Panc1 (cell line): ENCODE measurements at regions of chr6 and their contacts with region 1.

Region 1: DNA sequence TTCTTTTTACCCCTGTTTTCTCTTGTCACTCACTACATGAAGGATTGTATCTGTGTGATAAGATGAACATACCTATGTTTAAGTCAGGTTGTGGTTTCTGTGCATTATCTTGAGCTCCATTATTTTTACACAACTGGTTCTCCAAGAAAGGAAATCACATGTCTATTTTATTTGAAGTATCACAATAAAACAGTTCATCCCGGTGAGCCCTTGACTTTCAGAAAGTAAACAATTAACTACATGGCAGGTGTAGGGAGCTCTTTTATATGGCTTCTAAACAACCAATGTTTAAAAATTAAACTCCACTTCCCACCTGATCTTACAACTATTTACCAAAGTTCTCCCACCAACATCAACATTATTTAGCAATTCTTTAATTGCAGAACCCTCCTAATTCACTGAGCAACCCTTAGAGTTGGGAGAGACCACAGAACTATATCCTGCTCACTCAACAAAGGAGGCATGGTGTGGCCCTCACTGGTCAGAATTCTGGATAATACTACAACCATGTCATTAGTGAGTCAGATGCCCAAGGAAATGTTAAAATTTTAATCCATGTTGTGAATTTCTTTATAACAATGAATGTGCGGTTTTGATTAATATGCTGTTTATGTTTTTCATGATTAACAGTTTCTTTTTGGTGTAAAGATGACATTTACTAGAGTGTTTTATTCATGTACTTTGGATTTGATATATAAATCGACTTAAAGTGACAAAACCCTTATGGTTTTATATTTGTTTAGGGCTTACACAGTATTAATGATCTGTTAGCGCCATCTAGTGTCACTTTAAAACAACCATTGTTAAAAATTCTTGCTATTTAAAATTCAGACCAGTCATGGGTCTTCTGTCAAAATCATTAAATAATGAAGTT is 50.0 kb upstream of the SCGN start:
- DNase-seq: peak; percentile 15
- ATAC-seq: no peak
- H3K4me3 ChIP-seq: no peak overlapping the region
- H3K27ac ChIP-seq: no peak overlapping the region
- H3K4me1 ChIP-seq: no peaks in the 10 kb centered on the region
- H3K27me3 ChIP-seq: no peaks in the 10 kb centered on the region; the same call in 1 of the 2 replicates
- CTCF ChIP-seq: peak; percentile 32; the same call in 1 of the 2 replicates

Region 2: DNA sequence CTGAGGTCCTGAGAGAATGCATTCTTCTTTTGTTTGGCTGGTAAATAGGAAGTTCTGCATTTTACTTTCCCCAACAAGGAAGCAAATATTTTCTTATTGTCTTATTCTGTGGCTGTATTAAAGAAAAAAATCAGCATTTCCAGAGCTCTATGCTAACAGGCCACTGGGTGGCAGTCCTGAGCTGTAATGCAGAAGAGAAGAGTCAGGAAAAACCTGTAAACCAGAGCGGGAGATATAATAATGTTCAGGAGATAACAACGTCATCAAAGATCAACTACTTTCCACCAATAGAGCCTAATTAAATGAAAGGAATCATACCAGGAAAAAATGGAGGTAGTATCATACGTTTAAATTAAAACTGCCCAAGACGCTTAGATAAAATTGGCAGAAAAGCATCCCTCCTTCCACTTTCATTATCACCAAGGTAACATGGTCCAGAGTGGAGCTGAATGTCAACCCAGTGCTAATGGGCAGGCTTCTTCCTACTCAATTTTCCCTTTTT is 378.5 kb before region 1 on chr6:
- CTCF ChIA-PET with region 1: interaction called, 3 read pairs
- POLR2A ChIA-PET with region 1: no interaction called
- in situ Hi-C with region 1: no loop called
- intact Hi-C with region 1: loop called (anchors 2 kb)
- DNase-seq: peak; percentile 45
- ATAC-seq: no peak
- H3K4me3 ChIP-seq: no peak overlapping the region
- H3K27ac ChIP-seq: no peak overlapping the region
- H3K4me1 ChIP-seq: no peaks in the 10 kb centered on the region; the same call in none of the 2 replicates
- H3K27me3 ChIP-seq: no peaks in the 10 kb centered on the region; the same call in 1 of the 2 replicates
- CTCF ChIP-seq: peak; percentile 84

Region 3: DNA sequence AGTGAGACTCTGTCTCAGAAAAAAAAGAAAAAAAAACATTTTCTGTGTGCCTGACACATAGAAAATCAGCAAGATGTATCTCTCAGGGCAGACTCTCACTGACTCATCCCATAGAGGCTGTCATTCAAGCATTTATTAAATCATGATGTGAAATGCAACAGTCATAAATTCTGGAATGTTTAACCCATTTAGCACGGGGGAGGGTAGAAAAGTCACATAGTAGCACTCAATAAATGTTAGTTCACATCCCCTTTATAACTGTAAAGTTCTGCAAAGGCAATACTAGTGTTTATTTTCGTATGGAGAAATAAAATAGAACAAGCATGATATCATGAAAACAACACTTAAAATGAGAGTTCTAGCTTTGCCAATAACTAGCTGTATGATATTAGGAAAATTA is 338.4 kb before region 1 on chr6:
- CTCF ChIA-PET with region 1: no interaction called
- POLR2A ChIA-PET with region 1: no interaction called
- in situ Hi-C with region 1: no loop called
- intact Hi-C with region 1: loop called (anchors 2 kb)
- DNase-seq: no peak
- ATAC-seq: no peak
- H3K4me3 ChIP-seq: no peak overlapping the region
- H3K27ac ChIP-seq: no peak overlapping the region
- H3K4me1 ChIP-seq: no peaks in the 10 kb centered on the region
- H3K27me3 ChIP-seq: peaks cover 3% of the 10 kb centered on the region; the same call in 1 of the 2 replicates
- CTCF ChIP-seq: no peak

Region 4: GRCh38 chr6:25889877-25890853 is 288.1 kb after region 1 on chr6:
- CTCF ChIA-PET with region 1: no interaction called
- POLR2A ChIA-PET with region 1: no interaction called
- in situ Hi-C with region 1: no loop called
- intact Hi-C with region 1: loop called (anchors 5 kb)
- DNase-seq: peak; percentile 17
- ATAC-seq: peak; percentile 88
- H3K4me3 ChIP-seq: no peak overlapping the region
- H3K27ac ChIP-seq: no peak overlapping the region
- H3K4me1 ChIP-seq: no peaks in the 10 kb centered on the region
- H3K27me3 ChIP-seq: peaks cover 3% of the 10 kb centered on the region; the same call in 1 of the 2 replicates
- CTCF ChIP-seq: peak; percentile 60; the same call in 1 of the 2 replicates